Body of pancreas (tissue), 4 donors: ENCODE measurements at regions of chr22 and their contacts with region 1.

Region 1: DNA sequence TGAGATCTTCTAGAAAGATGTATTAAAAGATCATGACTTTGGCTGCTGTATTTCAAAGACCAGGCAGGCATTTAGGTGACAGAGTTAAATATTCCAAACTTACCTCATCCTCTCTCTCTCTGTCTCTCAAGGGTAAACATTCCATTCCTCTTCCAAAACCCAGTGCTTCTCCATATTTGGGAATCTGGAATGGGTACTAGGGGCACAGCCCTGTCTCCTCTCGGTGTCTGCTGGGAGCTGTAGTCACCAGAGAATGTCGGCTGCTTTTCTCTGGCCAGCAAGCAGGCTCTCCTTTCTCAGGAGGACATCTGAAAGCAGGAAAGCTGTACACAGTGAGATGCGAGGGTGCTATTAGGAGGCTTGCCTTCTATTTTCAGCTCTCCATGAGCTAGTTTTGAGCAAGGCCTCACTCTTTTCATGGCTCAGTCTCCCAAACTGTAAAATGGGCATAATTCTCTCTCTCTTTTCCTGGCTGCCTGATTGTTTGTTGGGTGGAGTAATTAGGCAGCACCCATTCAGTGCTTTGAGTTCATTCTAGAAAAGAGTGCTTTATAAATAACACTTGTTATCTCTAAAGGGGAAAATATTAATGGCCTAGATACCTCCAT is 9.3 kb upstream of the PEX26 start:
- DNase-seq: no peak
- ATAC-seq: no peak
- H3K4me3 ChIP-seq: no peak overlapping the region
- H3K27ac ChIP-seq: no peak overlapping the region
- H3K4me1 ChIP-seq: no peaks in the 10 kb centered on the region
- H3K27me3 ChIP-seq: no peaks in the 10 kb centered on the region
- CTCF ChIP-seq: no peak
- POLR2A ChIP-seq: no peak

Region 2: GRCh38 chr22:17830043-17830961 is 238.2 kb before region 1 on chr22:
- intact Hi-C with region 1: loop called (anchors 5 kb)
- DNase-seq: peak; percentile 88 to 92 (median 89)
- ATAC-seq: peak; percentile 94
- H3K4me3 ChIP-seq: no peak overlapping the region
- H3K27ac ChIP-seq: no peak overlapping the region
- H3K4me1 ChIP-seq: no peaks in the 10 kb centered on the region
- H3K27me3 ChIP-seq: no peaks in the 10 kb centered on the region
- CTCF ChIP-seq: peak; percentile 98 to 99 (median 98)
- POLR2A ChIP-seq: no peak